ENCODE measurements at regions of chr16 and their contacts with region 1.

Region 1: GRCh38 chr16:30526823-30527635 is 663 bp upstream of the ZNF768 start:
- DNase-seq: peak; percentile 99 to 100
- ATAC-seq: peak; percentile 97
- H3K4me3 ChIP-seq: peak overlapping the region; percentile 88
- H3K27ac ChIP-seq: peak overlapping the region in 1 of 2 donors; percentile 78
- H3K4me1 ChIP-seq: no peaks in the 10 kb centered on the region
- H3K27me3 ChIP-seq: no peaks in the 10 kb centered on the region

Region 2: GRCh38 chr16:30429678-30430427 is 97.2 kb before region 1 on chr16 and contains the start of gene DCTPP1:
- intact Hi-C with region 1: loop called in 1 of 2 experiments (anchors 2 kb)
- DNase-seq: peak; percentile 96 to 97
- ATAC-seq: peak; percentile 97
- H3K4me3 ChIP-seq: peak within 1 kb of the TSS; percentile 37 to 59
- H3K27ac ChIP-seq: peak within 1 kb of the TSS in 1 of 2 donors; percentile 30
- H3K4me1 ChIP-seq: no peaks in the 10 kb centered on the region
- H3K27me3 ChIP-seq: no peaks in the 10 kb centered on the region
- total RNA-seq, gene DCTPP1: 18.2 to 19.7 TPM

Region 3: DNA sequence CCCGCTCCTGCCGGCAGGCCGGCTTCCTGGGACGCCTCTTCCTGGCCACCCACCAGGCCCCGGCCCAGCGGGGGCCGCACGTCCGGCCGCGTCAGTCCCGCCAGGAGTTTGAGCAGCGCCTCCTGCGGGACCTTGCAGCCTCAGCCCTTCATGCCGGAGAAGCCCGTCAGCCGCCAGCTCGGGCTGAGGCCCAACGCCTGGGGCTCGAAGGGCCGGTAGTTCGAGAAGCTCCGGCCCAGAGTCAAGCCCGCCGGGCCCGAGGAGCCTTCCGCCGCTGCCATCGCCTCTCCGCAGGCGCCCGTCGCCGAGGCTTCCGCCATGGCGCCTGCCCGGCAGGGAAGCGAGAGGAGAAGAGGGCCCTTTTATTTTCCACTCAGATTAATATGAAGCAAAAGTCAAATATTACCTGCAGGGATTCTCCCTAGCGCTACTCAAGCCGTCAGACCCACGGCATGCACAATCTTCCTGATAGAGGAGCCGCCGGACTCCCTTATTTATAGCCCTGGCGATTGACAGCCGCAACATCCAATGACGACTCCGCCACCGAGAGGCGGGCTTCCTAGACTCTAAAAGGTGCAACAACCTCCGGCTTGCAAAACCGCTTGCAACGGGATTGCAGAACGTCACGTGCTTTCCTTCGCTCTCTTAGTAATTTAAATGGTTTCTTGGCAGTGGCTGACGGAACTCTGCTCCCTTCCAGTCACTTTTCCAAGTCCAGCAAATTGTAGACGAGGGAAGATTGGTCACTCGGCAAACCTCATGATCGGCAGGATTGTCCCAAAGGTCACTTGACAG is 81.4 kb before region 1 on chr16 and contains the start of gene SEPHS2:
- intact Hi-C with region 1: loop called in 1 of 2 experiments (anchors 5 kb)
- DNase-seq: peak; percentile 98 to 99
- ATAC-seq: peak; percentile 96
- H3K4me3 ChIP-seq: peak within 1 kb of the TSS; percentile 68 to 87
- H3K27ac ChIP-seq: peak within 1 kb of the TSS; percentile 61 to 64
- H3K4me1 ChIP-seq: no peaks in the 10 kb centered on the region
- H3K27me3 ChIP-seq: no peaks in the 10 kb centered on the region
- total RNA-seq, gene SEPHS2: 25.1 to 29.3 TPM

Region 4: DNA sequence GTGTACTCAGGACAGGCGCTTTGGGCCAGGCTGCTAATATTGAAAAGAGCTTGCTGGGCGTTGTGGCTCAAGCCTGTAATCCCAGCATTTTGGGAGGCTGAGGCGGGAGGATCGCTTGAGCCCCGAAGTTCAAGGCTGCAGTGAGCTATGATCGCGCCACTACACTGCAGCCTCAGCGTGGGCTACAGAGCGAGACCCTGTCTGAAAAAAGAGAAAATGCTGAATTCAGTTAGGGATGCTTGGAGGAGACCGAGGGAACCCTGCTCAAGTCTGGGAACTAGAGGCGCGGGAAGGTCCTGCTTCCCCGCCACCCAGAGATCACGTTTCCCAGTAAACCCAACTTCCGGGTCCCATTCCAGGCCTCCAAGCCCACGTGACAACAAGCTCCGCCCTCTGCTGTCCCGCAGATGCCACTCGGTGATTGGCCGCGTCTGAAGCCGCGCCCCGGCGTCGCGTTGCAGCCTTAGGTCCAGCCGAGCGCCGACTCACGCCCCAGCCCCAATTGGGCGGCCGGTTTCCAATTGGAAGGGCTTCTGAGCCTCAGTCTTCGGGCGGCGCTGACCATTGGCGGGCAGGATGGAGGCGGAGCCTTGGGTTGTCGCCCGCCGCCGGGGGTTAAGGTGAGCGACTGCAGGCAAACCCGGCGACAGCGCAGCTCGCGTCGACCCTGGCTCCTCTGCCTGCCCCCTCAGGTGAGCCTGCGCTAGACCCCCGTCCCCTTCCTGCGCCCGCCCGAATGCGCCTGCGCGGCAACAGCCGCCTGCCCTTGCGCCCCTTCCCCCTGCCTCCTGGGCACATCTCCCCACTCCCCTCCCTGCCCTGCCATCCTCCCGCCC is 221.0 kb after region 1 on chr16 and contains the start of gene PHKG2:
- intact Hi-C with region 1: no loop called
- DNase-seq: peak; percentile 100
- ATAC-seq: peak; percentile 99
- H3K4me3 ChIP-seq: peak within 1 kb of the TSS; percentile 52 to 79
- H3K27ac ChIP-seq: peak within 1 kb of the TSS in 1 of 2 donors; percentile 84
- H3K4me1 ChIP-seq: no peaks in the 10 kb centered on the region
- H3K27me3 ChIP-seq: no peaks in the 10 kb centered on the region
- total RNA-seq, gene PHKG2: 15.8 to 20.8 TPM